CD4-positive, alpha-beta T cell (primary cell): ENCODE measurements at regions of chr3 and their contacts with region 1.

Region 1: DNA sequence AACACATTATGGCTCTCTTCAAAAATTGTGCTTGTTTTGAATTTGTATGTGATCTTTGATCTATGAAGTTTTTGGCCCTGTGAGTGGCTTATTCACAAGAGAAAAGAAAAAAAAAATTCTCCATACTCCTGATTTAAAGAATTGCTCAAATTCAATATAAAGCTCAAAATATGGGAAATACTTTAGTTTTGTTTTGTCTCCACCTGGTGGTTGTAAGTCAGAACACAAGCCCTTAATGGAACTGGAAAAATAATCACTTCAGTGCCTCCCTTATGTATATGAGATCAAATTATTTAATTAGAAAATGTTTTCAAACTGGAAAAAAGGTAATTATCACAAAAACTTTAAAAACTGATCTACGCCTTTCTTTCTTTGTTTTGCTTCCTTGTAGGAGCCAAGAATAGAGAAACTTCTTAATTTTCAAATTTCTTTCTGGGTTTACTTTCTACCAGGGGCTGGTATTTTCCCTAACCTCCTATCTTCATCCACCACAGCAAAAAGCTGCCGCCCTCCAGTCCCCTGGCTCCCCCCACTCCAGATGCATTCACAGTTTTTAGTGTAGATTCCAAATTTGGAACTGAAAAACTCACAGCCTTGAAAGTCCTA is 50.6 kb downstream of the SERP1 start:
- DNase-seq: peak in 5 of 14 experiments; percentile 3 to 74 (median 63)
- ATAC-seq: peak; percentile 64
- H3K4me3 ChIP-seq: no peak overlapping the region
- H3K4me3 Mint-ChIP-seq: no peak overlapping the region
- H3K27ac ChIP-seq: no peak overlapping the region
- H3K27ac Mint-ChIP-seq: no peak overlapping the region
- H3K4me1 ChIP-seq: no peaks in the 10 kb centered on the region
- H3K4me1 Mint-ChIP-seq: no peaks in the 10 kb centered on the region
- H3K27me3 ChIP-seq: no peaks in the 10 kb centered on the region
- H3K27me3 Mint-ChIP-seq: no peaks in the 10 kb centered on the region
- CTCF ChIP-seq: peak; percentile 85

Region 2: DNA sequence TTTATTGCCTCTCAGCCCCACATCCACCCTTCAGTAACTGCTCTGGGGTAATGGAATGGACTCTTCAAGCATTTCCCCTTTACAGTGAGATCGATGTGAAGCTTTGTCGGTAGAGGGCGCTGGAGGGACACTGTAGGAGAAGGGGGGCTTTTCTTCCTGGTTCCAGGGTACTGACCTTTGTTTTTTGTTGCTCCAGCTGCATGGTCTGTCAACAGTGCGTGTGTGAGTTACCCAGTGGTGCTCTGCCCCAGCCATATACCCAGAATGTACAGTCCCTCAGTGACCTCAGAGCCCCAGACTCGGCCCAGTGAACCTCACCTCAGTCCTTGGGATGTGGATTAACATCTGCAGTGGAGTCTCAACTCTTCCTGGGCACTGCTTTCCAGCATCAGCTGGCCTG is 267.8 kb before region 1 on chr3:
- CTCF ChIA-PET with region 1: no interaction called
- POLR2A ChIA-PET with region 1: no interaction called
- intact Hi-C with region 1: loop called in 1 of 2 experiments (anchors 2 kb)
- DNase-seq: peak in 5 of 14 experiments; percentile 4 to 38 (median 16)
- ATAC-seq: no peak
- H3K4me3 ChIP-seq: no peak overlapping the region
- H3K4me3 Mint-ChIP-seq: no peak overlapping the region
- H3K27ac ChIP-seq: no peak overlapping the region
- H3K27ac Mint-ChIP-seq: no peak overlapping the region
- H3K4me1 ChIP-seq: no peaks in the 10 kb centered on the region
- H3K4me1 Mint-ChIP-seq: no peaks in the 10 kb centered on the region
- H3K27me3 ChIP-seq: peaks cover 5 to 6% of the 10 kb centered on the region in 2 experiments
- H3K27me3 Mint-ChIP-seq: peaks cover 41% of the 10 kb centered on the region
- CTCF ChIP-seq: no peak

Region 3: GRCh38 chr3:150286390-150287147 is 209.1 kb before region 1 on chr3:
- CTCF ChIA-PET with region 1: interaction called, 12 read pairs
- POLR2A ChIA-PET with region 1: interaction called, 5 read pairs
- intact Hi-C with region 1: loop called (anchors 1 kb)
- DNase-seq: peak in 5 of 14 experiments; percentile 1 to 68 (median 59)
- ATAC-seq: peak; percentile 82
- H3K4me3 ChIP-seq: no peak overlapping the region
- H3K4me3 Mint-ChIP-seq: no peak overlapping the region
- H3K27ac ChIP-seq: no peak overlapping the region
- H3K27ac Mint-ChIP-seq: no peak overlapping the region
- H3K4me1 ChIP-seq: no peaks in the 10 kb centered on the region
- H3K4me1 Mint-ChIP-seq: no peaks in the 10 kb centered on the region
- H3K27me3 ChIP-seq: peaks cover 0 to 8% of the 10 kb centered on the region in 2 experiments
- H3K27me3 Mint-ChIP-seq: peaks cover 16% of the 10 kb centered on the region
- CTCF ChIP-seq: peak; percentile 65

Region 4: GRCh38 chr3:150384296-150385212 is 111.1 kb before region 1 on chr3:
- CTCF ChIA-PET with region 1: interaction called, 4 read pairs
- POLR2A ChIA-PET with region 1: no interaction called
- intact Hi-C with region 1: loop called in 1 of 2 experiments (anchors 1 kb)
- DNase-seq: peak; percentile 2 to 85 (median 18)
- ATAC-seq: peak; percentile 99
- H3K4me3 ChIP-seq: peak overlapping the region; percentile 37
- H3K4me3 Mint-ChIP-seq: peak overlapping the region; percentile 17
- H3K27ac ChIP-seq: peak overlapping the region in 1 of 2 donors; percentile 16
- H3K27ac Mint-ChIP-seq: no peak overlapping the region
- H3K4me1 ChIP-seq: peaks cover 18% of the 10 kb centered on the region
- H3K4me1 Mint-ChIP-seq: peaks cover 20% of the 10 kb centered on the region
- H3K27me3 ChIP-seq: no peaks in the 10 kb centered on the region
- H3K27me3 Mint-ChIP-seq: no peaks in the 10 kb centered on the region
- CTCF ChIP-seq: peak; percentile 74

Region 5: GRCh38 chr3:150483226-150483625 is 12.4 kb before region 1 on chr3:
- CTCF ChIA-PET with region 1: no interaction called
- POLR2A ChIA-PET with region 1: no interaction called
- intact Hi-C with region 1: no loop called
- DNase-seq: no peak
- ATAC-seq: no peak
- H3K4me3 ChIP-seq: no peak overlapping the region
- H3K4me3 Mint-ChIP-seq: no peak overlapping the region
- H3K27ac ChIP-seq: no peak overlapping the region
- H3K27ac Mint-ChIP-seq: no peak overlapping the region
- H3K4me1 ChIP-seq: no peaks in the 10 kb centered on the region
- H3K4me1 Mint-ChIP-seq: no peaks in the 10 kb centered on the region
- H3K27me3 ChIP-seq: no peaks in the 10 kb centered on the region
- H3K27me3 Mint-ChIP-seq: no peaks in the 10 kb centered on the region
- CTCF ChIP-seq: no peak

Region 6: DNA sequence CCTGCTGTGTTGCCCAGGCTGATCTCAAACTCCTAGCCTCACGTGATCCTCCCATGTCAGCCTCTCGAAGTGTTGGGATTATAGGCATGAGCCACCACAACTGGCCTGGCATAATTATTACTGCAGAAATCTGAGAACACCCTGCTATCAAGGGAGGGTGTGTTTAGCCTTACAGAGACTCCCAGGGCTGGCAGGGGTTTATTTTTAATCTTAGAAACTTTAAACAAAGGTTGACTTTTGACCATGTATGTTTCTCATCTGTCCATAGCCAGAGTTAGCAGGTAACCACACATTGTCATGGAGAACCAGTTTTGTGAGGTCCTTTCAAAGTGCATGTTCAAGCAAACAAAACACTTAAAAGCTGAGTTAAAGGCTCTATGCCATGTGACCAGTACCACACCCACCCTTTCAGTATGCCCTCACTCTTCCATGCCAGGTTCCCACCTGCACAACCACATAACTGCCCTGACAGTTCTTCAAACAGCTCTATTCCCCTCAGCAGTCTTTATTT is 256.1 kb after region 1 on chr3:
- CTCF ChIA-PET with region 1: no interaction called
- POLR2A ChIA-PET with region 1: no interaction called
- intact Hi-C with region 1: no loop called
- DNase-seq: no peak
- ATAC-seq: no peak
- H3K4me3 ChIP-seq: no peak overlapping the region
- H3K4me3 Mint-ChIP-seq: no peak overlapping the region
- H3K27ac ChIP-seq: no peak overlapping the region
- H3K27ac Mint-ChIP-seq: peak overlapping the region; percentile 42
- H3K4me1 ChIP-seq: peaks cover 44% of the 10 kb centered on the region
- H3K4me1 Mint-ChIP-seq: peaks cover 88% of the 10 kb centered on the region
- H3K27me3 ChIP-seq: no peaks in the 10 kb centered on the region
- H3K27me3 Mint-ChIP-seq: no peaks in the 10 kb centered on the region
- CTCF ChIP-seq: no peak